CD8-positive, alpha-beta T cell (primary cell): ENCODE measurements at regions of chr6 and their contacts with region 1.

Region 1: DNA sequence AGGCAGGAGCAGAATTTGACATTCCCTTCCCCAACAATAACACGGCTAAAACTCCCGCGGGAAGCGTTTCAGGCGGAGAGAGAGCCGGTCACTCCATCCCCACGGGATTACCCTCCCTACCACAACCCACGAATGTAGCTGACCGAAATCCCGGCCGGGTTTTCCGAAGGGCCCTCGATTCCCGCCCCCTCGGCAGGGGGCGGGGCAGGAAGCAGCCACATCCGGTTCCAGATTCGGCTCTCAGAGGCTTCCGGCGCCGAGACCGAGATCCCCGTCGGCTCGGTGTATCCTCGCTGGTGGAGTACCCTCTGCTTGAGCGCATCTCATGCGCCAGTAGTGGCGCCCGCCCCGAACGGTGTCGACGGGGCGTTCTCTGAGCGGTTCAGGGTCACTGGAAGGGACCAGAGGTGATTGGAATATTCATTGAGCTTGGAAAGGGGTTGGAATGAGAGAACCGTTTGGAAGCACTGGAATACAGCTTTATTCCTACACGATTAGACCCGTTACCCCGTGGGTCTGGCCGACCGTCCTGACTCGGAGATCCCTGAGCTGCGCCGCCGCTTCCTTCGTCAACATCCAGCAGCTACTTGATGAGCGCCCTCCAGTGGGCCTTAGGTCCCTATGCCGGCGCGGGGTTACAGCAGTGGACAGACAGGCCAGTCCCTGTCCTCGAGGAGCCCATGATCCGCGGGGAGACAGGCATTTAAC is 649 bp upstream of the RGL2 start:
- DNase-seq: peak; percentile 82 to 97 (median 94)
- ATAC-seq: peak; percentile 83
- H3K4me3 ChIP-seq: peak overlapping the region; percentile 88 to 91
- H3K4me3 Mint-ChIP-seq: peak overlapping the region; percentile 99
- H3K27ac ChIP-seq: peak overlapping the region; percentile 83 to 96
- H3K27ac Mint-ChIP-seq: peak overlapping the region; percentile 99
- H3K4me1 ChIP-seq: peaks cover 14% of the 10 kb centered on the region
- H3K4me1 Mint-ChIP-seq: peaks cover 41% of the 10 kb centered on the region
- H3K27me3 ChIP-seq: no peaks in the 10 kb centered on the region
- H3K27me3 Mint-ChIP-seq: no peaks in the 10 kb centered on the region
- CTCF ChIP-seq: peak; percentile 70

Region 2: DNA sequence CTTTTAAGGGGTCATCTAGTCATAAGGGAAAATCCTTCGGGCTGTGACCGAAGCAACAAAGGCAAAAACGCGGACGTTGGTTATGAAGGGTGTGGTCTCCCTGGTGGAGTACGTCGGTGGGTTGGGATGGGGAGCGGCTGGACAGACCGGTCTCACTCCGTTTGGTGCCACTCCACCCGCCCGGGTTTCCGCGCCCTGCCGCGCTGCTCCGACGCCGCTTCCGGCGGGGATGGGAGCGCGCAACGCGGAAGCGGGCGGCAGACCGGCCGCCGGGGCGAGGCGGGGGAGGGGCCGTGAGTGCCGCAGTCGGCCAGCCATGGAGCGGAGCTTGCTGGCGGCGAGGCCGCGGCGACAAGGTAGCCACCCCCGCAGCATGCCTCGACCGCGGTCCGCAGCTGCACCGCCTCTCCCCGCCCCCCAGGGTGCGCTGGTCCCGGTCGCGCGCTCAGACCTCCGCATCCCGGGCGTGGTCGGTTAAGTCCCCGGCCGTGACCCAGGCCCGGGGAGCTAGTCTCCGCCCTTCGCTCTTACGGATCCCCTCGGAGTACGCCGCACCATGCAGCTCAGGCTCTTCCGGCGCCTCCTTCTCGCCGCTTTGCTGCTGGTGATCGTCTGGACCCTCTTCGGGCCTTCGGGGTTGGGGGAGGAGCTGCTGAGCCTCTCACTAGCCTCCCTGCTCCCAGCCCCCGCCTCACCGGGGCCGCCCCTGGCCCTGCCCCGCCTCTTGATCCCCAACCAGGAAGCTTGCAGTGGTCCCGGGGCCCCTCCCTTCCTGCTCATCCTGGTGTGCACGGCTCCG is 22.3 kb before region 1 on chr6 and contains the start of gene B3GALT4:
- CTCF ChIA-PET with region 1: interaction called, 7 read pairs
- POLR2A ChIA-PET with region 1: interaction called, 48 read pairs
- intact Hi-C with region 1: loop called (anchors 1 kb)
- DNase-seq: peak; percentile 28 to 88 (median 68)
- ATAC-seq: peak; percentile 67
- H3K4me3 ChIP-seq: peak within 1 kb of the TSS; percentile 93 to 95
- H3K4me3 Mint-ChIP-seq: peak within 1 kb of the TSS; percentile 89
- H3K27ac ChIP-seq: peak within 1 kb of the TSS; percentile 79 to 95
- H3K27ac Mint-ChIP-seq: peak within 1 kb of the TSS; percentile 92
- H3K4me1 ChIP-seq: peaks cover 61% of the 10 kb centered on the region
- H3K4me1 Mint-ChIP-seq: peaks cover 71% of the 10 kb centered on the region
- H3K27me3 ChIP-seq: no peaks in the 10 kb centered on the region
- H3K27me3 Mint-ChIP-seq: no peaks in the 10 kb centered on the region
- CTCF ChIP-seq: peak; percentile 55
- total RNA-seq, gene B3GALT4: 7.9 to 8.8 TPM

Region 3: DNA sequence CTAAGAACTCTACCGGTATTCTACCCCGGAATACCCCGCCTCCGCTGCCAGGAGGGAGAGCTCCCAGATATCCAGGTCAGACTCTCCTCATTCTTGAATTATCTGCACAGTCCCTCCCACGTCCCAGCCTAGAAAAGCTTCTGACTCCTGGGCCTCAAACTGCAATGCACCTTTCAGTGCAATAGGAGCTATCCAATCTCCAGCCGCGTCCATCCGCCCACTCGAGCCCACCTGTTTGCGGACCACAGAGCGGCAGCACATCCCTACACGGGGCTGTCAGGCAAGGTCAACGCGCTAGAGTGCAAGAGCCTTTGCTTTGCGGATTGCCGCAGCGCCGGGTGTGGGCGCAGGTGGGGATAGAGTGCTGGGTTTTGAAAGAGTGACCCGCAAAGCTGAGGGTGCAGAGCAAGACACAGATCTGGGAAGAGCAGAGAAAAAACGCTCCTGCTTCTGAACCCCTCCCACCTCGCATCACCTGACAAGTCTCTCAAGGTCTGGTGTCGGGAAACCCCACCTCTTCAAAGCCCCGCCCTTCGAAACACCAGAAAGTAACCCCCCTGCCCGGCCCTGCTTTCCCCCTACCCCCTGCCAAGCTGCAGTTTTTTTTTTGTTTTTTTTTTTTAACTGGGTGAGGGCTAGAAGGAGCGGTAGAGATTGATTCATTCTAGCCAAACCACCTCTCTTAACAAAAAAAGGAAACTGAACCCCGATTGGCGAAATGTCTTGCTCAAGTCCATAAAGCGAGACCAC is 13.2 kb after region 1 on chr6:
- CTCF ChIA-PET with region 1: interaction called, 21 read pairs
- POLR2A ChIA-PET with region 1: interaction called, 28 read pairs
- intact Hi-C with region 1: loop called (anchors 1 kb)
- DNase-seq: peak; percentile 68 to 96 (median 84)
- ATAC-seq: peak; percentile 51
- H3K4me3 ChIP-seq: peak overlapping the region; percentile 95 to 100
- H3K4me3 Mint-ChIP-seq: peak overlapping the region; percentile 98
- H3K27ac ChIP-seq: peak overlapping the region; percentile 86 to 99
- H3K27ac Mint-ChIP-seq: peak overlapping the region; percentile 97
- H3K4me1 ChIP-seq: peaks cover 41% of the 10 kb centered on the region
- H3K4me1 Mint-ChIP-seq: peaks cover 57% of the 10 kb centered on the region
- H3K27me3 ChIP-seq: no peaks in the 10 kb centered on the region
- H3K27me3 Mint-ChIP-seq: no peaks in the 10 kb centered on the region
- CTCF ChIP-seq: no peak

Region 4: DNA sequence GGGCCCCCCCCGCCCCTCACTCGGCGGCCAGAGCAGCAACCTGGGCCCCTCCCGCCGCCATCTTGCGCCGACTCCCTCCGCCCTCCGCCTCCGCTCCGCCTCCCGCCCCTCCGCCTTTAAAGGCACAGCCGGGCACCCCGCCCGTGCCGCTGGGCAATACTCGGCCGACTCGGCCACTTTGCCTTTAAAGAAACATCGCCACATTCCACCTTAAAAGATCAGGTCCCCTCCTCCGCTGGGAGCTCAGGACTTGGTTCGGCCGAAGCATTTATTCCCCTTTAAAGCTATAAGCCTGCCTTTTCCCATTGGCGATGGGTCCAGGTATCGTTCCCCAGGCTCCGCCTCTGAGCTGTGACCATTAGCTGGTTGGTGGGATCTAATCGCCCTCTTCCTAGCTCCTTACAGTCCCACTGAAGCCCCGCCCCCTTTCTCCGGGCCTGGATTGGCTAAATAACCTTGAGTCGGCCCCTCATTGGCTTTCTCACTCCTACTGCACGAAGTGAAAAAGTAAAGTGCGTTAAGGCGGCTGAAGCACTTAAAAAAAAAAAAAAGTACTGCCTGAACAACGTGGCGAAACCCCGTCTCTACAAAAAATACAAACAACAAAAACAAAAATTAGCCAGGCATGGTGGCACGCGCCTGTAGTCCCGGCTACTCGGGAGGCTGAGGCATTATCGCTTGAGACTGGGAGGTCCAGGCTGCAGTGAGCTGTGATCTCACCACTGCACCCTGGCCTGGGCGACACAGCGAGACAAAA is 18.5 kb after region 1 on chr6 and contains the start of gene ZBTB22:
- CTCF ChIA-PET with region 1: interaction called, 21 read pairs
- POLR2A ChIA-PET with region 1: interaction called, 28 read pairs
- intact Hi-C with region 1: loop called (anchors 1 kb)
- DNase-seq: peak; percentile 91 to 98 (median 96)
- ATAC-seq: peak; percentile 61
- H3K4me3 ChIP-seq: peak within 1 kb of the TSS; percentile 72 to 78
- H3K4me3 Mint-ChIP-seq: peak within 1 kb of the TSS; percentile 99
- H3K27ac ChIP-seq: peak within 1 kb of the TSS; percentile 60 to 99
- H3K27ac Mint-ChIP-seq: peak within 1 kb of the TSS; percentile 97
- H3K4me1 ChIP-seq: peaks cover 65% of the 10 kb centered on the region
- H3K4me1 Mint-ChIP-seq: peaks cover 77% of the 10 kb centered on the region
- H3K27me3 ChIP-seq: no peaks in the 10 kb centered on the region
- H3K27me3 Mint-ChIP-seq: no peaks in the 10 kb centered on the region
- CTCF ChIP-seq: no peak
- total RNA-seq, gene ZBTB22: 8.8 to 9.3 TPM

Region 5: GRCh38 chr6:33430991-33431879 is 131.8 kb after region 1 on chr6:
- CTCF ChIA-PET with region 1: interaction called, 3 read pairs
- POLR2A ChIA-PET with region 1: interaction called, 10 read pairs
- intact Hi-C with region 1: loop called (anchors 1 to 2 kb)
- DNase-seq: peak; percentile 77 to 93 (median 88)
- ATAC-seq: peak; percentile 59
- H3K4me3 ChIP-seq: peak overlapping the region; percentile 38 to 53
- H3K4me3 Mint-ChIP-seq: peak overlapping the region; percentile 93
- H3K27ac ChIP-seq: peak overlapping the region; percentile 53 to 81
- H3K27ac Mint-ChIP-seq: peak overlapping the region; percentile 94
- H3K4me1 ChIP-seq: peaks cover 56% of the 10 kb centered on the region
- H3K4me1 Mint-ChIP-seq: peaks cover 64% of the 10 kb centered on the region
- H3K27me3 ChIP-seq: no peaks in the 10 kb centered on the region
- H3K27me3 Mint-ChIP-seq: no peaks in the 10 kb centered on the region
- CTCF ChIP-seq: no peak

Region 6: GRCh38 chr6:35259194-35259947 is 1960.0 kb after region 1 on chr6 and contains the start of gene ZNF76:
- CTCF ChIA-PET with region 1: no interaction called
- POLR2A ChIA-PET with region 1: no interaction called
- intact Hi-C with region 1: no loop called
- DNase-seq: peak; percentile 86 to 97 (median 93)
- ATAC-seq: peak; percentile 73
- H3K4me3 ChIP-seq: peak within 1 kb of the TSS; percentile 75 to 95
- H3K4me3 Mint-ChIP-seq: peak within 1 kb of the TSS; percentile 97
- H3K27ac ChIP-seq: peak within 1 kb of the TSS; percentile 88 to 96
- H3K27ac Mint-ChIP-seq: peak within 1 kb of the TSS; percentile 99
- H3K4me1 ChIP-seq: peaks cover 42% of the 10 kb centered on the region
- H3K4me1 Mint-ChIP-seq: peaks cover 55% of the 10 kb centered on the region
- H3K27me3 ChIP-seq: no peaks in the 10 kb centered on the region
- H3K27me3 Mint-ChIP-seq: no peaks in the 10 kb centered on the region
- CTCF ChIP-seq: no peak
- total RNA-seq, gene ZNF76: 54.6 to 57.8 TPM